ENCODE measurements at regions of chr3 and their contacts with region 1.

Region 1: GRCh38 chr3:14124615-14125190 is at the starts of genes CHCHD4 and TMEM43:
- DNase-seq: peak; percentile 98 to 99 (median 99)
- H3K4me3 ChIP-seq: peak within 1 kb of the TSS; percentile 67 to 97 (median 90)
- H3K4me3 Mint-ChIP-seq: peak within 1 kb of the TSS; percentile 96
- H3K27ac ChIP-seq: peak within 1 kb of the TSS; percentile 87 to 91
- H3K27ac Mint-ChIP-seq: peak within 1 kb of the TSS; percentile 89 to 99 (median 96)
- H3K4me1 ChIP-seq: peaks cover 24 to 29% of the 10 kb centered on the region in 2 donors
- H3K4me1 Mint-ChIP-seq: peaks cover 46% of the 10 kb centered on the region
- H3K27me3 ChIP-seq: no peaks in the 10 kb centered on the region
- H3K27me3 Mint-ChIP-seq: peaks cover 0 to 4% (median 0%) of the 10 kb centered on the region in 3 donors
- CTCF ChIP-seq: no peak
- polyA plus RNA-seq, gene CHCHD4: 6.5 to 13.8 (median 13.6) TPM
- polyA plus RNA-seq, gene TMEM43: 55.4 to 69.7 (median 66.7) TPM

Region 2: DNA sequence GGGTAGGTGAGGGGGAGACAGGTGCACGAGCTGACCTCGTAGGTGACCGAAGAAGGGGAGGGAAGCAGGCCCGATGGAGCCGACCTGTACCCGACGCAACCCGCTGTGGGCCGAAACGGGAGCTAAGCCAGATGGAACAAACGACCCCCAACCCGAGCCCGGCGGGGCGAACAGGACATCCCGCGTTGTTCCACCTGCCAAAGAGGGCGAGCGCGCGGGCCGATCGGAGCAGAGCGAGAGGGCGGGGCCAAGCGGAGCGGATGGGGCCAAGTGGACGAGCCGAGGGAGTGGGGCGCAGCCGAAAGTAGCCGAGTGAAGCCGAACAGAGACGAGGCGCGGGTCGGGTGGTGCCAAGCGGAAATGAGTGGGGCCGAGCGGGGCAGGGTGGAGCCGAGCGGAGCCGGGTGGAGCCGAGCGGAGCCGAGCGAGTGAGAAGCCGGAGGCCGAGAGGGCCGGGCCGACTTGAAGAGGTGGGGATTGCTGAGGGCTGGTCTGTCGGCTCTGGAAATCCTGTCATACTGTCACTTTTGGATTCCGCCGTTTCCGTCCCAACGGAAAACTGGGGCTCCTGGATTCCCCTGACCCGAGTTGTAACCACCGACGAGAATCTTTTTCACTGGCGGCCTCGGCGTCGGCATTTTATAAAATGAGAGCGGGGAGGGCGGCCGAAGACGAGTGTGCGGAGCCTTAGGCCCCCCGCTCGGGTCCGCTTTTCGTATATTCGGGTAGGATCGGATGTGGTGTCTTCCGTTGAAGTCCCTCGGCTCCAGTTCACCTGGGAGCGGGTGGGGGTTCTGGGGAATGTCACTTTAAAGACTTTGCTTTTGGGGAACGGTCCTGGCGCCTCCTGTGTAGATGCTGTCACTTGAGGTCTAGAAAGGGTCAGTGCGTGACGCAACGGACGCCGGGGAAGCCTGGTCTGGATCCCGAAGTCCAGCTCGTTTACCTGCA is 229.3 kb before region 1 on chr3:
- intact Hi-C with region 1: loop called (anchors 5 to 10 kb)
- DNase-seq: peak; percentile 78 to 84 (median 81)
- H3K4me3 ChIP-seq: peak overlapping the region; percentile 36 to 77 (median 65)
- H3K4me3 Mint-ChIP-seq: peak overlapping the region; percentile 90 to 95
- H3K27ac ChIP-seq: peak overlapping the region in 1 of 2 donors; percentile 47
- H3K27ac Mint-ChIP-seq: peak overlapping the region; percentile 57 to 86 (median 84)
- H3K4me1 ChIP-seq: peaks cover 15 to 23% of the 10 kb centered on the region in 2 donors
- H3K4me1 Mint-ChIP-seq: peaks cover 23% of the 10 kb centered on the region
- H3K27me3 ChIP-seq: peaks cover 0 to 17% of the 10 kb centered on the region in 2 donors
- H3K27me3 Mint-ChIP-seq: peaks cover 21 to 32% (median 27%) of the 10 kb centered on the region in 3 donors
- CTCF ChIP-seq: no peak

Region 3: GRCh38 chr3:14016885-14017475 is 107.7 kb before region 1 on chr3:
- intact Hi-C with region 1: no loop called
- DNase-seq: no peak
- H3K4me3 ChIP-seq: no peak overlapping the region
- H3K4me3 Mint-ChIP-seq: peak overlapping the region in 1 of 2 donors; percentile 28
- H3K27ac ChIP-seq: no peak overlapping the region
- H3K27ac Mint-ChIP-seq: no peak overlapping the region
- H3K4me1 ChIP-seq: no peaks in the 10 kb centered on the region
- H3K4me1 Mint-ChIP-seq: no peaks in the 10 kb centered on the region
- H3K27me3 ChIP-seq: no peaks in the 10 kb centered on the region
- H3K27me3 Mint-ChIP-seq: peaks cover 0 to 3% (median 0%) of the 10 kb centered on the region in 3 donors
- CTCF ChIP-seq: no peak

Region 4: GRCh38 chr3:14144423-14145075 is 19.8 kb after region 1 on chr3:
- intact Hi-C with region 1: loop called in 1 of 2 experiments (anchors 2 kb)
- DNase-seq: peak; percentile 95 to 99 (median 98)
- H3K4me3 ChIP-seq: peak overlapping the region; percentile 41 to 61 (median 43)
- H3K4me3 Mint-ChIP-seq: peak overlapping the region; percentile 74 to 90
- H3K27ac ChIP-seq: peak overlapping the region; percentile 100
- H3K27ac Mint-ChIP-seq: peak overlapping the region; percentile 99 to 100 (median 100)
- H3K4me1 ChIP-seq: peaks cover 44 to 53% of the 10 kb centered on the region in 2 donors
- H3K4me1 Mint-ChIP-seq: peaks cover 51% of the 10 kb centered on the region
- H3K27me3 ChIP-seq: no peaks in the 10 kb centered on the region
- H3K27me3 Mint-ChIP-seq: peaks cover 0 to 2% (median 0%) of the 10 kb centered on the region in 3 donors
- CTCF ChIP-seq: no peak

Region 5: GRCh38 chr3:14178247-14179113 is 53.8 kb after region 1 on chr3 and contains the starts of genes LSM3 and XPC:
- intact Hi-C with region 1: loop called (anchors 1 to 2 kb)
- DNase-seq: peak; percentile 98 to 99 (median 98)
- H3K4me3 ChIP-seq: peak within 1 kb of the TSS; percentile 55 to 93 (median 87)
- H3K4me3 Mint-ChIP-seq: peak within 1 kb of the TSS; percentile 92 to 97
- H3K27ac ChIP-seq: peak within 1 kb of the TSS; percentile 61 to 94
- H3K27ac Mint-ChIP-seq: peak within 1 kb of the TSS; percentile 95 to 100 (median 98)
- H3K4me1 ChIP-seq: peaks cover 14 to 21% of the 10 kb centered on the region in 2 donors
- H3K4me1 Mint-ChIP-seq: peaks cover 34% of the 10 kb centered on the region
- H3K27me3 ChIP-seq: no peaks in the 10 kb centered on the region
- H3K27me3 Mint-ChIP-seq: peaks cover 0 to 5% (median 0%) of the 10 kb centered on the region in 3 donors
- CTCF ChIP-seq: no peak
- polyA plus RNA-seq, gene LSM3: 4.1 to 23.2 (median 19.8) TPM
- polyA plus RNA-seq, gene XPC: 13.4 to 22.0 (median 15.5) TPM

Region 6: GRCh38 chr3:14391033-14391432 is 266.3 kb after region 1 on chr3:
- intact Hi-C with region 1: no loop called
- DNase-seq: peak; percentile 74 to 80 (median 75)
- H3K4me3 ChIP-seq: no peak overlapping the region
- H3K4me3 Mint-ChIP-seq: no peak overlapping the region
- H3K27ac ChIP-seq: peak overlapping the region; percentile 39 to 71
- H3K27ac Mint-ChIP-seq: peak overlapping the region; percentile 71 to 91 (median 81)
- H3K4me1 ChIP-seq: peaks cover 49 to 54% of the 10 kb centered on the region in 2 donors
- H3K4me1 Mint-ChIP-seq: peaks cover 48% of the 10 kb centered on the region
- H3K27me3 ChIP-seq: no peaks in the 10 kb centered on the region
- H3K27me3 Mint-ChIP-seq: peaks cover 1 to 8% (median 5%) of the 10 kb centered on the region in 3 donors
- CTCF ChIP-seq: no peak

Region 7: GRCh38 chr3:14651440-14652251 is 526.9 kb after region 1 on chr3 and contains the start of gene CCDC174:
- intact Hi-C with region 1: loop called in 1 of 2 experiments (anchors 5 kb)
- DNase-seq: peak; percentile 99 to 100 (median 99)
- H3K4me3 ChIP-seq: peak within 1 kb of the TSS; percentile 88 to 93 (median 89)
- H3K4me3 Mint-ChIP-seq: peak within 1 kb of the TSS; percentile 94 to 97
- H3K27ac ChIP-seq: peak within 1 kb of the TSS; percentile 94 to 97
- H3K27ac Mint-ChIP-seq: peak within 1 kb of the TSS; percentile 97 to 99 (median 98)
- H3K4me1 ChIP-seq: peaks cover 21 to 39% of the 10 kb centered on the region in 2 donors
- H3K4me1 Mint-ChIP-seq: peaks cover 37% of the 10 kb centered on the region
- H3K27me3 ChIP-seq: no peaks in the 10 kb centered on the region
- H3K27me3 Mint-ChIP-seq: peaks cover 0 to 3% (median 2%) of the 10 kb centered on the region in 3 donors
- CTCF ChIP-seq: no peak
- polyA plus RNA-seq, gene CCDC174: 6.2 to 7.9 (median 7.4) TPM

Region 8: DNA sequence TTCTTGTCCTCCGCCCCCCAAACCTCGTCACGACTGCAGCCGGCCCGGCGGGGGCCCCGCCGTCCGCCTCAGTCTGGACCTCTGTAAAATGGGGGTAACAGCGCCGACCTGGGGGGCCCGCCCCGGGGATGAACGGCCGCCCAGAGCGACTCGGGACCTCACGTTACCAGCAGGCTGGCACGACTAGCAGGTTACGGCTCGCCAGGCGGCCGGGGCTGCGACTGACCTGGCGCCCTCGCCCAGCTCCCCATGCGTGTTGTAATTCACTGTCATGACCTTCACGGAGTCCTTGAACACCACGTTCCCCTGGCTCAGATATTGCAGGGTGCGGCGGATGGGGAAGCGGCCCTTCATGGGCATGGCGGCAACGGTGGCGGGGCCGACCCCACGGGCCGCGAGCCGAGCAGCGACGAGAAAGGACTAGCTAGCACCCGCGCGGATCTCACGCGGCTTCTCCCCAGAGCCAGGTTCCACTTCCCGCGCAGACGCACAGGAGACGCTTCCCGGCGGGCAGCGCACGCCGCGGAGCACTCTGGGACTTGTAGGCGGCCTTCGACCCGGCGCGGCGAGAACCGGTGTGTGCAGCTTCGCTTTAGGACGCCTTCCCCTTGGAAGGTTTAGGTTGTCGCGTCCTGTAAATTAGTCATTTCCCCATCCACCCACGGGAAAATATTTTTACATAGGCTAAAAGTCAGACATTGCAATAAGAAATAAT is 940.3 kb after region 1 on chr3 and contains the start of gene MRPS25:
- intact Hi-C with region 1: loop called in 1 of 2 experiments (anchors 10 kb)
- DNase-seq: peak; percentile 87 to 90 (median 87)
- H3K4me3 ChIP-seq: peak within 1 kb of the TSS; percentile 68 to 94 (median 80)
- H3K4me3 Mint-ChIP-seq: peak within 1 kb of the TSS; percentile 96 to 97
- H3K27ac ChIP-seq: peak within 1 kb of the TSS; percentile 69 to 84
- H3K27ac Mint-ChIP-seq: peak within 1 kb of the TSS; percentile 90 to 97 (median 95)
- H3K4me1 ChIP-seq: peaks cover 20 to 25% of the 10 kb centered on the region in 2 donors
- H3K4me1 Mint-ChIP-seq: peaks cover 21% of the 10 kb centered on the region
- H3K27me3 ChIP-seq: no peaks in the 10 kb centered on the region
- H3K27me3 Mint-ChIP-seq: peaks cover 0 to 2% (median 0%) of the 10 kb centered on the region in 3 donors
- CTCF ChIP-seq: no peak
- polyA plus RNA-seq, gene MRPS25: 23.7 to 60.7 (median 24.6) TPM